ENCODE measurements at regions of chr2 and their contacts with region 1.

Region 1: DNA sequence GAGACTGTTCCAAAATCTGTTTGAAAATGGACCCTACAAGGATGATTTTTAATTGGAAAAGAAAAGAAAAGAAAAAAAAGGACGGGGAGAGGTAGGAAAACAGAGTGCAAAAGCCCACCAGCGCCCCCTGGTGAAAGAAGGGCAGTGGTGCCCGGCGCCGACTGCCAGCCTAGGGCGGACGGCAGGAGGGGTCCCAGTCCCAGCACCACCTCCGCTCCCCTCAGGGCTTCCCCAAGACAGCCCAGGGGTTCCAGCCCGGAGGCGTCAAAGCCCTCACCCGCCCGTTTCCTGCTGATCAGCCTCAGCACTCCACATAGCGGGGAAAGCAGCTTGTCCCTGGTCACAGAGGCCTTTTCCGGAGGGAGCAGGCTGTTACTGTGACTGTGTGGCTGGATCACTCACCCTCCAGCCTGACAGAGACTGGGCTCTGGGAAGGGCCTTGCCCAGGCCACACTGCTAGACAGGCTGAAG is 213.9 kb downstream of the TFCP2L1 start:
- DNase-seq: peak; percentile 90
- H3K4me3 ChIP-seq: peak overlapping the region in 1 of 2 experiments; percentile 11; a peak in 1 of 4 replicates
- H3K27ac ChIP-seq: no peak overlapping the region
- H3K4me1 ChIP-seq: peaks cover 0 to 19% of the 10 kb centered on the region in 2 experiments; a peak in 1 of 4 replicates
- H3K27me3 ChIP-seq: peaks cover 12% of the 10 kb centered on the region; the same call in 1 of the 2 replicates
- CTCF ChIP-seq: peak; percentile 97
- EP300 ChIP-seq: no peak
- RAD21 ChIP-seq: peak; percentile 91

Region 2: GRCh38 chr2:120520929-120521912 is 549.8 kb before region 1 on chr2:
- CTCF ChIA-PET with region 1: no interaction called
- POLR2A ChIA-PET with region 1: no interaction called
- DNase-seq: peak; percentile 65
- H3K4me3 ChIP-seq: no peak overlapping the region; a peak in 1 of 4 replicates
- H3K27ac ChIP-seq: no peak overlapping the region
- H3K4me1 ChIP-seq: no peaks in the 10 kb centered on the region; a peak in 1 of 4 replicates
- H3K27me3 ChIP-seq: peaks cover 40% of the 10 kb centered on the region
- CTCF ChIP-seq: peak; percentile 73
- EP300 ChIP-seq: no peak
- RAD21 ChIP-seq: peak; percentile 58

Region 3: DNA sequence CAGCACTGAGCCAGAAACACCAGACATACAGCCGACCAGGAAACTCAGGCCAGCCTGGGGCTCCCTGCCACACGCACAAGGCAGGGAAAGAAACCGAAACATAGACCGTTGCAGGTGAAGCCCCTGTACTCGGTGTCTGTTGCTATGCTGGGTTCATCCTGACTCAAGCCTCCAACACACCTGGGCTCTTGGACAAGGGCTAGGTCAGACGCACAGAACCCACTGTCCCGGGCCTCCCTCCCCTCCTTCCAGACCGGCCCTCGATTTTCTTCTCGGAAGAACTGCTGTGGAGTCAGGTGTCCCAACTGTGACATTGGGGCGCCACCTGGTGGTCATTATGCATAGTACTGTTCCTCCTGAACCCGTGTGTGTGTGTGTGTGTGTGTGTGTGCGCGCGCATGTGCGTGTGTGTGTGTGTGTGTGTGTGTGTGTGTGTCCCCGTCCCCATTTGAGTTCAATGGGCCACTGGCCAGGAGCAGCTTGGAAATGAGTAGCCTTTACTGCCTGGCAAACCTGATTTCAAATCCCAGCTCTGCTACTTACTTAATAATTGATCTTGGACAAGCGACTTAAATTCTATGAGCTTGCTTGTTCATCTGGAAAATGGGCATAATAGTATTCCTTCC is 390.8 kb before region 1 on chr2:
- CTCF ChIA-PET with region 1: interaction called, 124 read pairs
- POLR2A ChIA-PET with region 1: no interaction called
- DNase-seq: peak; percentile 83
- H3K4me3 ChIP-seq: peak overlapping the region in 1 of 2 experiments; percentile 24; a peak in 1 of 4 replicates
- H3K27ac ChIP-seq: no peak overlapping the region
- H3K4me1 ChIP-seq: peaks cover 0 to 10% of the 10 kb centered on the region in 2 experiments; a peak in 2 of 4 replicates
- H3K27me3 ChIP-seq: peaks cover 14% of the 10 kb centered on the region; the same call in 1 of the 2 replicates
- CTCF ChIP-seq: peak; percentile 58
- EP300 ChIP-seq: no peak
- RAD21 ChIP-seq: peak; percentile 86

Region 4: DNA sequence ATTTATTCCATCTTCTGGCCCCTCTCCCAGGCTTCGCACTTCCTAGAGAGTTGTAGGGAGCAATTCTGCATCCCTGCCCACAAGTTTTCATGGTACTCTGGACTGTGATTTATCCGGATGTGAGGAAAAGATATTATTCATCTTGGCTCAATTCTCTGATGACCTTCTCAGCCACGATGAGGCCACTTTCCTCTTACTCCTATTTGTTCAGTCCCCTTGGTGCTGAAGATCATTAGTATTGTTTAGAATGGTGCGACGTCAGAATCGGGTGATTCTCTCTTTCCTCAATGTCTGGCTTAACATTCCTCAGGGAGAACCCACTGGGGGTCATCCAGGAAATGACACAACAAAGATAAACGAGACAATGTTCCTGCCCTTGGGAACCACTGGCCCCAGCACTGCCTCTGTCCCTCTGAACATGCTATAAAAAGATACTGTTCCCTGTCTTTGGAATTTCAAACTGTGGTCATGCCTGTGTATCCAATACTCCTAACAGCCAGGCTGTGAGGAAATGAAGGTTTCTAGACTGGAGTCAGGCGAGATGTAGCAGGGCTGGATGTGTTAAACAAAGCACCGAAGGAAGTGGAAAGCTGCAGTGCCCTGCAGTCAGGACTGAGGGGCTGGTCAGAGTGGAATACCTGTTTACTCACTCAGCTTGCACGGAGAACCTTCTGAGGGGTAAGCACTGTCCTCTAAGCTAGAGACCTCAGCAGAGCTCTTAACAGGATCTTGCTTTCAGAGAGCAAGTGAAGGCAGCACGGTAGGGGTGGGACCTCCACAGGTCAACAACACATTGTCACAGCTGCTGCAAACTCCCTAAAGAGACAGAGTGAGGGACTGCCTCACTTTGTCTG is 348.3 kb before region 1 on chr2:
- CTCF ChIA-PET with region 1: interaction called, 10 read pairs
- POLR2A ChIA-PET with region 1: no interaction called
- DNase-seq: no peak
- H3K4me3 ChIP-seq: peak overlapping the region in 1 of 2 experiments; percentile 3; a peak in 1 of 4 replicates
- H3K27ac ChIP-seq: peak overlapping the region in 1 of 2 experiments; percentile 79; a peak in 2 of 4 replicates
- H3K4me1 ChIP-seq: peaks cover 12 to 24% of the 10 kb centered on the region in 2 experiments; a peak in 2 of 4 replicates
- H3K27me3 ChIP-seq: no peaks in the 10 kb centered on the region
- CTCF ChIP-seq: no peak
- EP300 ChIP-seq: no peak
- RAD21 ChIP-seq: no peak

Region 5: GRCh38 chr2:120773186-120773800 is 297.8 kb before region 1 on chr2:
- CTCF ChIA-PET with region 1: interaction called, 12 read pairs
- POLR2A ChIA-PET with region 1: no interaction called
- DNase-seq: no peak
- H3K4me3 ChIP-seq: no peak overlapping the region
- H3K27ac ChIP-seq: no peak overlapping the region
- H3K4me1 ChIP-seq: peaks cover 26 to 31% of the 10 kb centered on the region in 2 experiments; a peak in 3 of 4 replicates
- H3K27me3 ChIP-seq: no peaks in the 10 kb centered on the region
- CTCF ChIP-seq: no peak
- EP300 ChIP-seq: no peak
- RAD21 ChIP-seq: no peak

Region 6: DNA sequence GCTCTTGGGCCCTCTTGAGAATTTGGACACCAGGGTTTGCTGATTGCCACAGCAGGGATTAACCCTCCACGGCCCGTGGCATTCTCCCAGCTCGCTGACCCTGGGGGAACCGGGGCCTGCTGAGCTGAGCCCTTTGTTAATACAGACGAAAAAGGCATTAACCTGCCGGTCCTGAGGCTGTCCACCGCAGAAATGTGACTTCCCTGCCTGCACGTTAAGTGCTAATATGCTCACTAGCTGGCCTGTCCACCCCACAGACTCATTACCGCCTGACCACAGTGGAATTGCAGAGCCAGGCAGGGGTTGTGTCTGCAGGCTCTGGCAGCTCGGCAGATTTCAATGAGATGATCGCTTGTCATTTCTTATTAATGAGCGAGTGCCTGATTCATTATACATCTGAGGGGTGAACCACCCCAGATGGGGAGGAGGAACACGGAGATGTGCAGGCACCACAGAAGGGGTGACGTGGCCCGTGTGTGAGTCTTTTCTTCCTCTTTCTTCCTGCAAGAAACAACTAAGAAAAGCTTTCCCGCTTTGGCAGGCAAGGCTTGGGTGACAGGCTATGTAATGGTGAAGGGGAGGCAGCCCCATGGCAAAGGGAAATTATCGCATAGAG is 209.4 kb before region 1 on chr2:
- CTCF ChIA-PET with region 1: interaction called, 13 read pairs
- POLR2A ChIA-PET with region 1: no interaction called
- DNase-seq: no peak
- H3K4me3 ChIP-seq: no peak overlapping the region
- H3K27ac ChIP-seq: no peak overlapping the region
- H3K4me1 ChIP-seq: peaks cover 8 to 50% of the 10 kb centered on the region in 2 experiments
- H3K27me3 ChIP-seq: no peaks in the 10 kb centered on the region
- CTCF ChIP-seq: no peak
- EP300 ChIP-seq: no peak
- RAD21 ChIP-seq: no peak

Region 7: GRCh38 chr2:121058852-121059558 is 12.1 kb before region 1 on chr2:
- CTCF ChIA-PET with region 1: interaction called, 31 read pairs
- POLR2A ChIA-PET with region 1: no interaction called
- DNase-seq: peak; percentile 93
- H3K4me3 ChIP-seq: no peak overlapping the region
- H3K27ac ChIP-seq: no peak overlapping the region
- H3K4me1 ChIP-seq: peaks cover 0 to 26% of the 10 kb centered on the region in 2 experiments; a peak in 2 of 4 replicates
- H3K27me3 ChIP-seq: peaks cover 25% of the 10 kb centered on the region; the same call in 1 of the 2 replicates
- CTCF ChIP-seq: no peak
- EP300 ChIP-seq: peak in 1 of 2 experiments; percentile 82; a peak in 2 of 4 replicates
- RAD21 ChIP-seq: no peak

Region 8: DNA sequence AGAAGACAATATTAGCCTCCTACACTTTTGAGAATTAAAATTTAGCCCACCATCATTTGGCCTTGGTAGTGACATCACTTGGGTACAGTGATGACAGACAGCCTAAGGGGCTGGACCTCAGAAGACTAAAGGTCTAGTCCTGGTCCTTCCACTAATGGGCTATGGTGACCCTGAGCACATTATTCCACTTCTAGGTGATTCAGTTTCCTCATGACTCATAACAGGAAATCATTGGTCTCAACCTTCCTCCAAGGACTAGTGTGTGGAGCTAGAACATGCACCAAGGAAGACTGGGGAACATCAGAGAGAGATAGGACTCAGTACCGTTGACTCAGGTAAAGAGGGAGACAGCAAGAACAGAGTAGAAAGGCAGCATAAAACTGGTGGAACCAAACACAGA is 149.9 kb after region 1 on chr2:
- CTCF ChIA-PET with region 1: no interaction called
- POLR2A ChIA-PET with region 1: no interaction called
- DNase-seq: no peak
- H3K4me3 ChIP-seq: no peak overlapping the region
- H3K27ac ChIP-seq: no peak overlapping the region
- H3K4me1 ChIP-seq: no peaks in the 10 kb centered on the region
- H3K27me3 ChIP-seq: no peaks in the 10 kb centered on the region; the same call in 1 of the 2 replicates
- CTCF ChIP-seq: no peak
- EP300 ChIP-seq: no peak
- RAD21 ChIP-seq: no peak